H1 (cell line): ENCODE measurements at regions of chr10 and their contacts with region 1.

Region 1: DNA sequence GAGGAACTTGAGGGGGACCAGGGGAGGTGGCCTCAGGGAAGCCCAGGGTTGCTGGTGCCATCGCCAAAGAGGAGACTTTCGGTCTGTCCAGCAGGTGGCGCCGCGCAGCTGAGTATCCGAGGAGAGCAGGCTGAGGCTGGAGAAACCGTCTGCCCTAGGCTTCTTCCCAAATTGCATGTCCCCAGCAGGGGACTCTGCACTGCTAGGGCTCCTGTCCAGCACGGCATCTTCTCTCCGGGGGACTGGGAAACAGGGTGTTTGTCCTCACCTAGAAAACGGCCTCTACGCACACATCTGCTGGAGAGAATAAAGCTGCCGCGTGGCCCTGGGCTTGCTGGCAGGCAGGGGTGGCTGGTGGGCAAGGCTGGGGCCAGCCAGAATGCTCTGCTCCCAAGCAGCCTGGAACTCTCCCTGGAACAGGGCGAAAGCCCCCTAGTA is 161.9 kb downstream of the SH2D4B start:
- DNase-seq: peak; percentile 73 to 96
- H3K4me3 ChIP-seq: no peak overlapping the region
- H3K27ac ChIP-seq: no peak overlapping the region
- H3K4me1 ChIP-seq: no peaks in the 10 kb centered on the region; a peak in 1 of 7 replicates
- H3K27me3 ChIP-seq: no peaks in the 10 kb centered on the region
- CTCF ChIP-seq: peak; percentile 93 to 96 (median 94)
- EP300 ChIP-seq: no peak
- POLR2A ChIP-seq: no peak
- RAD21 ChIP-seq: peak; percentile 95 to 97

Region 2: DNA sequence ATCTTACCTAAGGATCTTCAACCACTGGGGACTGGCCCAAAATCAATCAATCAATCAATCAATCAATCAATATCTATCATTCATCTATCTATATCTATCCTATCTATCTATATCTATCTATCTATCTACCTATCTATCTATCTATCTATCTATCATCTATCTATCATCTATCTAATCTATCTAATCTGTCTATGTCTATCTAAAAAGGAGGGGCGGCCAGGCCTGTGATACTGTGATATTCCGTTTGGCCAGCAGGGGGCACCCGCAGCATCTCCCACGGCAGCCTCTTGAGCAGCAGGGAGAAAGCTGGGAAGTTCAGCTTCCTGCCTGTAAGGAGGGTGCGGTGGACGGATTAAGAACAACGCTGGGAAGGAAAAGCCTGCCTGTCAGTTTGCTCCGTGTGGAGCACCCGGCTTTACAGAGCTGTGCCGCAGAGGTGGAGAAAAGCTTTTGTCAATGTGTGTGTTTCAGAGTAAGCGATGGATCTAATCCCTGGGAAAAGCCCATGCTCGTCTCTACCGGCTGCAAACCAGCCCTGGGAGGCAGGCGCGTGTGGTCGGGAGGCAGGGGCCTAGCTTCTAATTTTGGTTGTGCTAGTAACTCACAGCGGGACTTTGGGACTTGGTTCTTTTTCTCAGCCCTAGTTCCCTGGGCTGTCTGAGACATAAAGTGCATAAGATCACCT is 36.9 kb before region 1 on chr10:
- CTCF ChIA-PET with region 1: interaction called, 42 read pairs
- POLR2A ChIA-PET with region 1: no interaction called
- DNase-seq: peak; percentile 75 to 98
- H3K4me3 ChIP-seq: peak overlapping the region in 3 of 4 experiments; percentile 21 to 51 (median 43); a peak in 5 of 8 replicates
- H3K27ac ChIP-seq: no peak overlapping the region
- H3K4me1 ChIP-seq: peaks cover 0 to 4% (median 3%) of the 10 kb centered on the region in 4 experiments; a peak in 3 of 7 replicates
- H3K27me3 ChIP-seq: peaks cover 0 to 2% (median 0%) of the 10 kb centered on the region in 4 experiments; a peak in 2 of 7 replicates
- CTCF ChIP-seq: peak; percentile 83 to 88 (median 86)
- EP300 ChIP-seq: no peak
- POLR2A ChIP-seq: no peak
- RAD21 ChIP-seq: peak; percentile 79 to 82

Region 3: GRCh38 chr10:80718024-80718423 is 18.4 kb after region 1 on chr10:
- CTCF ChIA-PET with region 1: interaction called, 31 read pairs
- POLR2A ChIA-PET with region 1: no interaction called
- DNase-seq: peak in 1 of 2 experiments; percentile 29
- H3K4me3 ChIP-seq: no peak overlapping the region
- H3K27ac ChIP-seq: no peak overlapping the region
- H3K4me1 ChIP-seq: no peaks in the 10 kb centered on the region
- H3K27me3 ChIP-seq: no peaks in the 10 kb centered on the region
- CTCF ChIP-seq: no peak
- EP300 ChIP-seq: no peak
- POLR2A ChIP-seq: no peak
- RAD21 ChIP-seq: no peak

Region 4: DNA sequence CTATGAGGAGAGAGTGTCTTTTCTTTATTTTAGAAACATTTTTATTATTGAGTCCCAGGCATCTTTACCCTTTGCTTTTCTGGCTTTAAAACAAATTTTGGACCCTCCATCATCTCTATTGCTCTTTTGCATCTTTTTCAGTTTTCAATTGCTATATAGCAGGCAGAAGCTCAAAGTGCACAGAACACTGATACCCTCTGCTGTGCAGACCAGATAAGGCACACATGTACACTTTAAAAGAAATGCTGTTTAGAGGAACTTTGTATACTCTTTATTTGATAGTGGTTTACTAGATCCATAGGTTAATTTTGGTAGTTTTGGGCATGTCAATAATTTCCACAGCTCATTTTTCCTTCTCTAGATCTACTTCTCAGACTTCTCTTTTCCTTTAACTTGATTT is 162.3 kb after region 1 on chr10:
- CTCF ChIA-PET with region 1: interaction called, 15 read pairs
- POLR2A ChIA-PET with region 1: no interaction called
- DNase-seq: no peak
- H3K4me3 ChIP-seq: no peak overlapping the region
- H3K27ac ChIP-seq: no peak overlapping the region
- H3K4me1 ChIP-seq: peaks cover 0 to 4% (median under 1%) of the 10 kb centered on the region in 4 experiments; a peak in 2 of 7 replicates
- H3K27me3 ChIP-seq: no peaks in the 10 kb centered on the region
- CTCF ChIP-seq: no peak
- EP300 ChIP-seq: no peak
- POLR2A ChIP-seq: no peak
- RAD21 ChIP-seq: no peak

Region 5: DNA sequence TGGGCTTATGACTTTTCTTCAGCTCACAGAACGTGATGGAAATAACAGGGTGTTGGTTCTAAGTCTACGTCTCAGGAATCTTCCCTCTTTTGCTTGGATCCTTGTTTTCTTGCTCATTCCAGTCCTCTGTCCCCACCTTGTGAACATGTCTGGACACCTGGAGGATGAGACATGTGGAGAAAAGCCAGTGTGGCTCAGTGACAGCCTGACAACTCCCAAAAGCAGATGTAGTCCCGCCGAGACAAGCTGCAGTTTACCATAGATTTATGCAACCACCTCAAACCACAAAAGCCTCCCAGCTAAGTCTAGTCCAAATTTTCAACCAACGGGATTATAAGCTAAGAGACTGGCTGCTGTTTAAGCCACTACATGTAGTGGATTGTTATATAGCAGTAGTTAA is 314.1 kb after region 1 on chr10:
- CTCF ChIA-PET with region 1: interaction called, 42 read pairs
- POLR2A ChIA-PET with region 1: no interaction called
- DNase-seq: no peak
- H3K4me3 ChIP-seq: no peak overlapping the region
- H3K27ac ChIP-seq: no peak overlapping the region
- H3K4me1 ChIP-seq: no peaks in the 10 kb centered on the region
- H3K27me3 ChIP-seq: no peaks in the 10 kb centered on the region
- CTCF ChIP-seq: no peak
- EP300 ChIP-seq: no peak
- POLR2A ChIP-seq: no peak
- RAD21 ChIP-seq: no peak